ENCODE measurements at regions of chr6 and their contacts with region 1.

Region 1: GRCh38 chr6:25942561-25943147 is 12.2 kb upstream of the SLC17A2 start:
- DNase-seq: peak in 2 of 4 experiments; percentile 33 to 58
- ATAC-seq: peak; percentile 95
- H3K4me3 ChIP-seq: no peak overlapping the region
- H3K27ac ChIP-seq: no peak overlapping the region
- H3K4me1 ChIP-seq: no peaks in the 10 kb centered on the region
- H3K27me3 ChIP-seq: no peaks in the 10 kb centered on the region; a peak in 1 of 5 replicates
- CTCF ChIP-seq: peak; percentile 63 to 91 (median 64); a peak in 5 of 6 replicates
- EP300 ChIP-seq: no peak
- POLR2A ChIP-seq: no peak
- RAD21 ChIP-seq: peak; percentile 97 to 99

Region 2: DNA sequence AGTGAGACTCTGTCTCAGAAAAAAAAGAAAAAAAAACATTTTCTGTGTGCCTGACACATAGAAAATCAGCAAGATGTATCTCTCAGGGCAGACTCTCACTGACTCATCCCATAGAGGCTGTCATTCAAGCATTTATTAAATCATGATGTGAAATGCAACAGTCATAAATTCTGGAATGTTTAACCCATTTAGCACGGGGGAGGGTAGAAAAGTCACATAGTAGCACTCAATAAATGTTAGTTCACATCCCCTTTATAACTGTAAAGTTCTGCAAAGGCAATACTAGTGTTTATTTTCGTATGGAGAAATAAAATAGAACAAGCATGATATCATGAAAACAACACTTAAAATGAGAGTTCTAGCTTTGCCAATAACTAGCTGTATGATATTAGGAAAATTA is 679.0 kb before region 1 on chr6:
- CTCF ChIA-PET with region 1: interaction called, 3 read pairs
- POLR2A ChIA-PET with region 1: no interaction called
- in situ Hi-C with region 1: no loop called
- intact Hi-C with region 1: loop called (anchors 5 kb)
- DNase-seq: no peak
- ATAC-seq: no peak
- H3K4me3 ChIP-seq: no peak overlapping the region
- H3K27ac ChIP-seq: no peak overlapping the region
- H3K4me1 ChIP-seq: no peaks in the 10 kb centered on the region
- H3K27me3 ChIP-seq: no peaks in the 10 kb centered on the region
- CTCF ChIP-seq: no peak
- EP300 ChIP-seq: no peak
- POLR2A ChIP-seq: no peak
- RAD21 ChIP-seq: no peak

Region 3: GRCh38 chr6:25717866-25718740 is 224.6 kb before region 1 on chr6:
- CTCF ChIA-PET with region 1: interaction called, 6 read pairs
- POLR2A ChIA-PET with region 1: no interaction called
- in situ Hi-C with region 1: no loop called
- intact Hi-C with region 1: loop called (anchors 1 kb)
- DNase-seq: peak; percentile 35 to 54 (median 48)
- ATAC-seq: peak; percentile 59; the same call in 2 of the 3 replicates
- H3K4me3 ChIP-seq: no peak overlapping the region
- H3K27ac ChIP-seq: no peak overlapping the region
- H3K4me1 ChIP-seq: no peaks in the 10 kb centered on the region
- H3K27me3 ChIP-seq: peaks cover 2 to 7% of the 10 kb centered on the region in 2 experiments; a peak in 2 of 5 replicates
- CTCF ChIP-seq: peak; percentile 52 to 75 (median 53); a peak in 5 of 6 replicates
- EP300 ChIP-seq: no peak
- POLR2A ChIP-seq: no peak
- RAD21 ChIP-seq: peak; percentile 74 to 79

Region 4: DNA sequence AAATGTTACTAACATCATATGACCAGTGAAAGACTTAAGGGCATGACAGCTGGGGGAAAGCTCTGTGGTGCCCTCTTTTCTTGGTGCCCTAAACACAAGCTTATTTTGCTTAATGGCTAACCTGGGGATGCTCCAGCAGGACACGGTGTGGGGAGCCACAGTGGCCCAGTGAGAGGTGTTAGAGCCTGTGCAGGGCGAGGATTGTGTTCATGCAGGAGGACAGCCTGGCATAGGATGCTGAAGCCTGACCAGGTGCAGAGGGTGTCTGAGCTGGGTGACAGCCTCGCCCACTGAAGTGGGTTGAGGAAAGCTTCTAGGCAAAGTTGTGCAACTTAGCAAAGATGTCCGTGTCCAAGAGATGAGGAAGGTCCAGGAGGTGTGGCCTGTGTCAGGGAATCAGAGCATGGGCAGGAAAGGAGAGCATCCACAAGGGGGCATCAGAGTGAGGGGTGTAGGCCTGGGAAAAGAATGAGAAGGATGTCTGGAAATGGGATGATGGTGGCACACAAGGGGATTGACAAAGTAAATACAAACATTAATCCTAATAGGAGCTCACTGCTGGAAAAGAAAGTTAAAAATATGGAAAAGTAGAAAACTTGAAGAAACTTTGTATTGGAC is 154.2 kb before region 1 on chr6:
- CTCF ChIA-PET with region 1: interaction called, 11 read pairs
- POLR2A ChIA-PET with region 1: no interaction called
- in situ Hi-C with region 1: no loop called
- intact Hi-C with region 1: loop called (anchors 1 kb)
- DNase-seq: peak; percentile 51 to 73 (median 61)
- ATAC-seq: peak; percentile 99
- H3K4me3 ChIP-seq: no peak overlapping the region
- H3K27ac ChIP-seq: no peak overlapping the region; the same call in 2 of the 3 replicates
- H3K4me1 ChIP-seq: no peaks in the 10 kb centered on the region
- H3K27me3 ChIP-seq: no peaks in the 10 kb centered on the region; a peak in 1 of 5 replicates
- CTCF ChIP-seq: peak; percentile 77 to 89 (median 77)
- EP300 ChIP-seq: no peak
- POLR2A ChIP-seq: no peak
- RAD21 ChIP-seq: peak; percentile 83 to 87

Region 5: GRCh38 chr6:25958700-25959162 is 16.1 kb after region 1 on chr6:
- CTCF ChIA-PET with region 1: no interaction called
- POLR2A ChIA-PET with region 1: no interaction called
- in situ Hi-C with region 1: no loop called
- intact Hi-C with region 1: no loop called
- DNase-seq: peak; percentile 50 to 80 (median 58)
- ATAC-seq: peak; percentile 24
- H3K4me3 ChIP-seq: no peak overlapping the region
- H3K27ac ChIP-seq: no peak overlapping the region
- H3K4me1 ChIP-seq: peaks cover 6 to 19% of the 10 kb centered on the region in 2 experiments; a peak in 4 of 5 replicates
- H3K27me3 ChIP-seq: no peaks in the 10 kb centered on the region
- CTCF ChIP-seq: no peak
- EP300 ChIP-seq: peak; percentile 35; the same call in 1 of the 2 replicates
- POLR2A ChIP-seq: no peak
- RAD21 ChIP-seq: no peak

Measured in K562 (cell line).